Activated naive CD4-positive, alpha-beta T cell treated with anti-CD3 and anti-CD28 coated beads for 36 hours (primary cell): ENCODE measurements at regions of chr9 and their contacts with region 1.

Region 1: DNA sequence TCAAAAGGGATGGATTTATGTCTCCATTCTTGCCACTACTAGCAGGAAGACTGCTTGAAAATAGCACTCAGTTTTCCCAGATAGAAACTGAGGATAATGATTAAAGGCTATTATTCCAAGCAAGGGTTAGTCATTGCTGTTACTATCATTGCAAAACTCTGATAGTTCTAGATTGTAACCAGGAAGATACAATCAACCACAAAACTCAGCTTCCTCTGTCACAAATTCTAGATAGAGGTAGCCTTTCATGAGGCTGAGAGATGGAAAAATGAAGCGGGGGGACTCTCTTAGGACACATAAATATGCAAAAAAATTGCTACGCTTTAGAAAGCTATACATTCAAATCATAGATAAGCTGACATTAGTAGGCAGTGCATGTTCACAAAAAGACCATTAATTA is 3.1 kb downstream of the ANXA1 start:
- DNase-seq: no peak
- H3K4me3 Mint-ChIP-seq: peak overlapping the region; percentile 62
- H3K27ac Mint-ChIP-seq: peak overlapping the region; percentile 86
- H3K4me1 Mint-ChIP-seq: peaks cover 73% of the 10 kb centered on the region
- H3K27me3 Mint-ChIP-seq: no peaks in the 10 kb centered on the region

Region 2: DNA sequence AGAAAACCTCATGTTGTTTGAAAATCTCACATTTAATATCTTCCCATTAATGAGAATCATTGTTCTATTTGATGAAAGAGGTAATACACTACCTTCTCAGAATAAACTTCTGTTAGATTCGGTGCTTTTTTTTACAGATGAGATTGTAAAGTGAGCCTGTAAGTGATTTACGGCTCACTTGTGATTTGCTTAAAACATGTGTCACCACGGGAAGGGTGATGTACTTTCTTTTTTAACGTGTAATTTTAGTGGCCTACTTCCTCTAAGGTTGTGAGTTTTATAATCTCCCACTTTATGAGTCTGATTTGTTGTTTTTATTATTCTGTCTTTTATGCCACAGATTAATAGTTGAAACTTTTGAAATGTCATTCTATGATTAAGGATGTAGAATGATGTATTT is 12.9 kb after region 1 on chr9:
- CTCF ChIA-PET with region 1: no interaction called
- intact Hi-C with region 1: loop called (anchors 1 kb)
- DNase-seq: no peak
- H3K4me3 Mint-ChIP-seq: peak overlapping the region; percentile 45
- H3K27ac Mint-ChIP-seq: peak overlapping the region; percentile 54
- H3K4me1 Mint-ChIP-seq: peaks cover 15% of the 10 kb centered on the region
- H3K27me3 Mint-ChIP-seq: no peaks in the 10 kb centered on the region

Region 3: GRCh38 chr9:73853547-73853946 is 698.8 kb after region 1 on chr9:
- CTCF ChIA-PET with region 1: no interaction called
- intact Hi-C with region 1: no loop called
- DNase-seq: no peak
- H3K4me3 Mint-ChIP-seq: no peak overlapping the region
- H3K27ac Mint-ChIP-seq: no peak overlapping the region
- H3K4me1 Mint-ChIP-seq: no peaks in the 10 kb centered on the region
- H3K27me3 Mint-ChIP-seq: no peaks in the 10 kb centered on the region